ENCODE measurements at regions of chr16 and their contacts with region 1.

Region 1: GRCh38 chr16:50735629-50736122 is 6.2 kb upstream of the CYLD start:
- DNase-seq: no peak
- ATAC-seq: no peak
- H3K4me3 ChIP-seq: no peak overlapping the region
- H3K4me3 Mint-ChIP-seq: no peak overlapping the region
- H3K27ac ChIP-seq: no peak overlapping the region
- H3K27ac Mint-ChIP-seq: no peak overlapping the region
- H3K4me1 ChIP-seq: peaks cover 14% of the 10 kb centered on the region
- H3K4me1 Mint-ChIP-seq: peaks cover 20% of the 10 kb centered on the region
- H3K27me3 ChIP-seq: no peaks in the 10 kb centered on the region
- H3K27me3 Mint-ChIP-seq: no peaks in the 10 kb centered on the region
- CTCF ChIP-seq: no peak

Region 2: DNA sequence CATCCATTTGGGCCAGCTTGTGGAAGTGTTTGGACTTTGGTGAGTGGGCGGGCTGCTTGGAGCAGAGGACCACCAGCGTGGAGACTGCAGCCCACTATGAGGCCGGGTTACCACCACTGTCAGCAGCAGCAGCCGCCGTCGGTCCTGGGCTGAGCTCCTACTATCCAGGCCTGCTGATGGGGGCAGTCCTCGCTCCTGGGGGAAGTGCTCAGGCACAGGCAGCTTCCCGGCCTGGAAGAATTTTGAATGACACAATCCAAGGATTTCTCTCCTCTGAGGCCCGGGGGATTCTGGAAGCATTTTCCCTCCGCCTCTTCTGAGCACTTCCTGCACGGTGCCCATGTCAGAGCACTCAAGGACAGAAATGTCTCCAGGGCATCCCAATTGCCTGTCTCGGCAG is 47.6 kb before region 1 on chr16:
- CTCF ChIA-PET with region 1: no interaction called
- POLR2A ChIA-PET with region 1: no interaction called
- intact Hi-C with region 1: loop called in 1 of 2 experiments (anchors 2 kb)
- DNase-seq: peak in 1 of 14 experiments; percentile 12
- ATAC-seq: no peak
- H3K4me3 ChIP-seq: no peak overlapping the region
- H3K4me3 Mint-ChIP-seq: no peak overlapping the region
- H3K27ac ChIP-seq: no peak overlapping the region
- H3K27ac Mint-ChIP-seq: no peak overlapping the region
- H3K4me1 ChIP-seq: peaks cover 53% of the 10 kb centered on the region
- H3K4me1 Mint-ChIP-seq: peaks cover 52% of the 10 kb centered on the region
- H3K27me3 ChIP-seq: no peaks in the 10 kb centered on the region
- H3K27me3 Mint-ChIP-seq: no peaks in the 10 kb centered on the region
- CTCF ChIP-seq: no peak

Region 3: DNA sequence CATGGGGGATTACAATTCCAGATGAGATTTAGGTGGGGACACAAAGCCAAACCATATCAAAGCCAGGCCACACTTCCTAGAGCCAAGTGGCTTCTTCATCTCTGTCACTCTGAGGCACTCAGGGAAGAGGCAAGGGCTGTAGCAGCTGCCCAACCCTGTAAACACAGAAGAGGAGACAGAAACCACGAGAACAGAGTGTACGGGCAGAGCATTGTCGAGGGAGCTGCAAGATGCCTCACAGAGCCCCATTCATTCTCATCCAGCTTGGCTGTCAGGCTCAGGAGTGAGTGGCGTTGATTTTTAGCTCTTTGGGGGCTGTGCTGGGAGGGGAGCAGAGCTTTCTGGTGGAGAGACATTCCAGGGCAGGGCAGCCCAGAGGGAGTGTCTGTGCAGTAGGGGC is 532.6 kb after region 1 on chr16:
- CTCF ChIA-PET with region 1: no interaction called
- POLR2A ChIA-PET with region 1: no interaction called
- intact Hi-C with region 1: no loop called
- DNase-seq: no peak
- ATAC-seq: no peak
- H3K4me3 ChIP-seq: no peak overlapping the region
- H3K4me3 Mint-ChIP-seq: no peak overlapping the region
- H3K27ac ChIP-seq: no peak overlapping the region
- H3K27ac Mint-ChIP-seq: no peak overlapping the region
- H3K4me1 ChIP-seq: no peaks in the 10 kb centered on the region
- H3K4me1 Mint-ChIP-seq: no peaks in the 10 kb centered on the region
- H3K27me3 ChIP-seq: no peaks in the 10 kb centered on the region
- H3K27me3 Mint-ChIP-seq: no peaks in the 10 kb centered on the region
- CTCF ChIP-seq: no peak